Activated CD4-positive, alpha-beta memory T cell treated with anti-CD3 and anti-CD28 coated beads for 36 hours (primary cell): ENCODE measurements at regions of chr15 and their contacts with region 1.

Region 1: GRCh38 chr15:72237286-72238224 is 6.6 kb upstream of the PKM start:
- DNase-seq: peak; percentile 91
- H3K4me3 Mint-ChIP-seq: peak overlapping the region; percentile 72
- H3K27ac Mint-ChIP-seq: peak overlapping the region; percentile 90
- H3K4me1 Mint-ChIP-seq: peaks cover 36% of the 10 kb centered on the region
- H3K27me3 Mint-ChIP-seq: peaks cover 2% of the 10 kb centered on the region

Region 2: GRCh38 chr15:72265031-72265430 is 27.5 kb after region 1 on chr15:
- CTCF ChIA-PET with region 1: interaction called, 3 read pairs
- POLR2A ChIA-PET with region 1: interaction called, 4 read pairs
- intact Hi-C with region 1: loop called (anchors 1 kb)
- DNase-seq: no peak
- H3K4me3 Mint-ChIP-seq: no peak overlapping the region
- H3K27ac Mint-ChIP-seq: no peak overlapping the region
- H3K4me1 Mint-ChIP-seq: peaks cover 33% of the 10 kb centered on the region
- H3K27me3 Mint-ChIP-seq: no peaks in the 10 kb centered on the region

Region 3: GRCh38 chr15:72532991-72533601 is 295.5 kb after region 1 on chr15:
- CTCF ChIA-PET with region 1: no interaction called
- POLR2A ChIA-PET with region 1: no interaction called
- intact Hi-C with region 1: no loop called
- DNase-seq: peak; percentile 40
- H3K4me3 Mint-ChIP-seq: no peak overlapping the region
- H3K27ac Mint-ChIP-seq: no peak overlapping the region
- H3K4me1 Mint-ChIP-seq: peaks cover 37% of the 10 kb centered on the region
- H3K27me3 Mint-ChIP-seq: no peaks in the 10 kb centered on the region